Left ventricle myocardium inferior (tissue), 1 donor: ENCODE measurements at regions of chr4 and their contacts with region 1.

Region 1: DNA sequence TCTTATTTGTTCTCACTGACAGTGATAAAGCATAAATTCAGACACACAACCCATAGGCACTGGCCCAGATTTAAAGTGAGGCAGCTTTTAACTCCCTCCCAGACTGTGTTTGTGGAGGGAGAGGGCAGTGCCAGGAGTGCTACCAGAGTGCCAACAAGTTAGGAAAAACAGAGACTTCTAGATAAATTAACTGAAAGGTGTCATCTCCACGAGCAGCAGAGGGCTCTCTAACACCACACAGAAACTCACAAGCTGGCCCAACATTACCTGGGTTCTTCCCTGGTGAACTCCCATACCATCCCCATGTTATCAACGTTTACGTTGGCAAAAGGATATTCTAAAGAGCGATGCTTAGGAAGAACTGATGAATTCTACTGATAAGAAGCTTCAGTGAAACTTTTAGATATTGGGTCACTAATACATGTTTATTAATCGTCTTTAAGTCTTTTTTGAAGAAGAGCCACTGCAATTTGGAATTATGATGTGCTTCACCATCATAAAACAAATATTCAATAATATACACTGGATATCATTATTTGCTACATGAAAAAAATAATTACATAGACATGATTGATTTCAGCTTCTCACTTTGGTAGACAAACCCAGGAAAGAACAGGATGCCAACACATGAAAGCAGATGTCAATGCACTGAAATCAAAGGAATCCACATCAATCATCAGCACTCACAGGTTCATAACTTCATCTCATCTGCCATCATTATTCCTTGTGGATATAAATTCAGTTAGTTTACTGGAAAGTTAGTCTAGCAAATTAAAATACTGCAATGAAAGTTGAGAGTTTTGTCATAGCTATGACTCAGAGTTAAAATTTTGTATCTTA is 121.2 kb upstream of the NAP1L5 start:
- DNase-seq: no peak
- H3K4me3 ChIP-seq: peak overlapping the region; percentile 68
- H3K27ac ChIP-seq: peak overlapping the region; percentile 91
- H3K4me1 ChIP-seq: peaks cover 83% of the 10 kb centered on the region
- H3K27me3 ChIP-seq: no peaks in the 10 kb centered on the region
- CTCF ChIP-seq: peak; percentile 76

Region 2: GRCh38 chr4:88706574-88706973 is 112.3 kb before region 1 on chr4:
- intact Hi-C with region 1: loop called (anchors 10 kb)
- DNase-seq: no peak
- H3K4me3 ChIP-seq: no peak overlapping the region
- H3K27ac ChIP-seq: peak overlapping the region; percentile 57
- H3K4me1 ChIP-seq: peaks cover 15% of the 10 kb centered on the region
- H3K27me3 ChIP-seq: no peaks in the 10 kb centered on the region
- CTCF ChIP-seq: peak; percentile 75

Region 3: GRCh38 chr4:88949605-88950004 is 130.8 kb after region 1 on chr4:
- intact Hi-C with region 1: no loop called
- DNase-seq: no peak
- H3K4me3 ChIP-seq: no peak overlapping the region
- H3K27ac ChIP-seq: no peak overlapping the region
- H3K4me1 ChIP-seq: no peaks in the 10 kb centered on the region
- H3K27me3 ChIP-seq: no peaks in the 10 kb centered on the region
- CTCF ChIP-seq: no peak

Region 4: DNA sequence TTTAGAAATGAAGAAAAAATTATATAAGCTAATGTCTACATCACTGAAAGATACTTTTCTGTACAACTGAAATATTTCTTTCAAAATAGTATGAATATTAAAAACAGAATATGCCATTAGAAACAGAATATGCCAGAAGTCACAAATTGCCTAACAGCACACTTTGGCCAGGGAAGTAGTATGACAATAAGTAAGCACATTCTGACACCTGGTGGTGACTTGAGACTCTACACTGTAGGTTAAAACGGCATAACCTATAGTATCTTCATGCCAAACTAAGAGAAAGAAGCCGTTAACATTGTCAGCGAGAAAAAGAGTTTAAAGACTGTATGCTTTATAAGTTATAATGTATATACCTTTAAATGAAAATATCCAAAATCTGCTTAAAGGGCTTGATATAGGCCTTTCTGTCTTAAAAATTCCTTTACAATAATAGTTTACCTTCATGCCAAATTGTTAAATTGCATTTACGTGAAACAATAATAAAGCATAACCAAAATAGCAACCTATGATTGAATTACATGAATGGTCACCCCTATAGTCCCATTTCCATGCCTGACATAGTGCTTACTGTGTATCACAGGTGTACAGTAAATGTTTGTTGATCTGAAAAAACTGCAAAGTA is 205.3 kb after region 1 on chr4:
- intact Hi-C with region 1: loop called (anchors 2 kb)
- DNase-seq: no peak
- H3K4me3 ChIP-seq: no peak overlapping the region
- H3K27ac ChIP-seq: no peak overlapping the region
- H3K4me1 ChIP-seq: peaks cover 26% of the 10 kb centered on the region
- H3K27me3 ChIP-seq: no peaks in the 10 kb centered on the region
- CTCF ChIP-seq: peak; percentile 86